GM12878 (cell line): ENCODE measurements at regions of chr12 and their contacts with region 1.

Region 1: GRCh38 chr12:94101738-94102660 is 46.4 kb upstream of the PLXNC1 start:
- DNase-seq: peak; percentile 56
- ATAC-seq: peak; percentile 93
- H3K4me3 ChIP-seq: peak overlapping the region; percentile 78
- H3K27ac ChIP-seq: no peak overlapping the region
- H3K4me1 ChIP-seq: no peaks in the 10 kb centered on the region; the same call in 1 of the 2 replicates
- H3K27me3 ChIP-seq: peaks cover 0 to 2% of the 10 kb centered on the region in 2 experiments; a peak in 2 of 4 replicates
- CTCF ChIP-seq: peak; percentile 79 to 97 (median 82); a peak in 5 of 6 replicates
- EP300 ChIP-seq: no peak
- POLR2A ChIP-seq: no peak
- RAD21 ChIP-seq: peak; percentile 93

Region 2: DNA sequence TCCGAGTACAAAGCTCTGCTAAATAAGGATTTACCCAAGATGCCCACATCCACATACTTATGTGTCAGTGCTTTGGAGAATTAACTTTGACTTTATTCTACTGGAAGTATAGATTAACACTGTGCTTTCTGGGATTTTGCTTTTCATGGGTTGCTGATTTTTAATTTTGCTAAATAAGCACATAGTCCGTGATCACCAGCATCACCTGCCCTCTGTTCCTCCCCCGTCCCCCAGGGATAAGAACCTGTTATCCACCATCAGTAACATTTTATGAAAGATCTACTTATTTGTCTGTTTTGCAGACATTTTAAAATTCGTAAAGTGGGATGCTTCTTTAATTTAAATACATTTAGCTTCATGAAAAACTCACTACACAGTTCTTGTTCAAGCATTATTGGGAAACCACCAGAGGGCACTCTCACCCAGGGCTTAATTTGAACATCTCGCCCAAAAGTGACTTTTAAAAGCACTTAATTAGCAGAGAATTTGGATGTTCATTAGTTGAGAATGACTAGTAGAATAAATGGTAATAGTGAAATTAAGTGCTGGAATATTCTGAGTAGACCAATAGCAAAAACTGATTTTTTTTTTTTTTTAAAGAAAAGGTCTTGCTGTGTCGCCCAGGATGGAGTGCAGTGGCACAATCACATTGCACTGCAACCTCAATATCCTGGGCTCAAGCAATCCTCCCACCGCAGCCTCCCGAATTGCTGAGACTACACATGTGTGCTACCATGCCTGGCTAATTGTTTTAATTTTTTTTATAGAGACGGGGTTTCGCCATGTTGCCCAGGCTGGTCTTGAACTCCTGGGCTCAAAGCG is 599.0 kb before region 1 on chr12:
- CTCF ChIA-PET with region 1: interaction called, 202 read pairs
- POLR2A ChIA-PET with region 1: interaction called, 3 read pairs
- RAD21 ChIA-PET with region 1: interaction called, 126 read pairs
- SMC1A ChIA-PET with region 1: interaction called, 115 read pairs
- in situ Hi-C with region 1: loop called (anchors 5 kb)
- intact Hi-C with region 1: loop called (anchors 1 kb)
- DNase-seq: no peak
- ATAC-seq: peak; percentile 58
- H3K4me3 ChIP-seq: no peak overlapping the region
- H3K27ac ChIP-seq: no peak overlapping the region
- H3K4me1 ChIP-seq: peaks cover 5% of the 10 kb centered on the region; the same call in 1 of the 2 replicates
- H3K27me3 ChIP-seq: no peaks in the 10 kb centered on the region
- CTCF ChIP-seq: peak; percentile 64 to 73 (median 72)
- EP300 ChIP-seq: no peak
- POLR2A ChIP-seq: no peak
- RAD21 ChIP-seq: peak; percentile 84

Region 3: GRCh38 chr12:93563807-93564538 is 538.0 kb before region 1 on chr12:
- CTCF ChIA-PET with region 1: interaction called, 148 read pairs
- POLR2A ChIA-PET with region 1: interaction called, 6 read pairs
- RAD21 ChIA-PET with region 1: interaction called, 121 read pairs
- SMC1A ChIA-PET with region 1: interaction called, 85 read pairs
- in situ Hi-C with region 1: loop called (anchors 5 kb)
- intact Hi-C with region 1: loop called (anchors 1 kb)
- DNase-seq: no peak
- ATAC-seq: peak; percentile 71
- H3K4me3 ChIP-seq: no peak overlapping the region
- H3K27ac ChIP-seq: no peak overlapping the region
- H3K4me1 ChIP-seq: no peaks in the 10 kb centered on the region
- H3K27me3 ChIP-seq: no peaks in the 10 kb centered on the region; a peak in 1 of 4 replicates
- CTCF ChIP-seq: peak; percentile 28 to 59 (median 45); a peak in 5 of 6 replicates
- EP300 ChIP-seq: no peak
- POLR2A ChIP-seq: no peak
- RAD21 ChIP-seq: peak; percentile 74

Region 4: GRCh38 chr12:93766796-93767523 is 335.0 kb before region 1 on chr12:
- CTCF ChIA-PET with region 1: interaction called, 81 read pairs
- POLR2A ChIA-PET with region 1: no interaction called
- RAD21 ChIA-PET with region 1: interaction called, 41 read pairs
- SMC1A ChIA-PET with region 1: interaction called, 46 read pairs
- in situ Hi-C with region 1: loop called (anchors 5 kb)
- intact Hi-C with region 1: loop called (anchors 1 kb)
- DNase-seq: no peak
- ATAC-seq: peak; percentile 77
- H3K4me3 ChIP-seq: no peak overlapping the region
- H3K27ac ChIP-seq: no peak overlapping the region
- H3K4me1 ChIP-seq: no peaks in the 10 kb centered on the region
- H3K27me3 ChIP-seq: no peaks in the 10 kb centered on the region
- CTCF ChIP-seq: peak; percentile 19 to 57 (median 49); a peak in 4 of 6 replicates
- EP300 ChIP-seq: no peak
- POLR2A ChIP-seq: no peak
- RAD21 ChIP-seq: peak; percentile 74

Region 5: DNA sequence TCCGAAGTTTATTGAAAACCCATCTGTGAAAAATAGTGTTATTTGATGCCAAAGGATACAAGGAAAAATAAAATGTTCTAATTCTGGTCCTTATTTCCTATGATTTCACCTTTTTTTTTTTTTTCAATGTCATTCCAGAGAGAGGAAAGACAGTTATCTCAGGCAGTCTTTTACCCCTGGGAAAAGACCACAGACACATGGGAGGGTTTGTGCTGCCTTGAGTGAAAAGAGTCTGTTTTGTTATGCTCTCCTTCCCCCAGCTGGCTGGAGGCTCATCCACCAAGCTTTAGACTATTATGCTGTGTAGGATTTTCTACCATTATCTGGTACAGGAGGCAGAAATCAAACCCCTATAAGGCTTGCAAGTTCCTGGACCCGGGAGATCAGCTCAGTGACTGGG is 273.0 kb before region 1 on chr12:
- CTCF ChIA-PET with region 1: no interaction called
- POLR2A ChIA-PET with region 1: no interaction called
- RAD21 ChIA-PET with region 1: no interaction called
- SMC1A ChIA-PET with region 1: no interaction called
- in situ Hi-C with region 1: no loop called
- intact Hi-C with region 1: no loop called
- DNase-seq: no peak
- ATAC-seq: no peak
- H3K4me3 ChIP-seq: no peak overlapping the region
- H3K27ac ChIP-seq: no peak overlapping the region
- H3K4me1 ChIP-seq: no peaks in the 10 kb centered on the region
- H3K27me3 ChIP-seq: no peaks in the 10 kb centered on the region
- CTCF ChIP-seq: no peak
- EP300 ChIP-seq: no peak
- POLR2A ChIP-seq: no peak
- RAD21 ChIP-seq: no peak

Region 6: DNA sequence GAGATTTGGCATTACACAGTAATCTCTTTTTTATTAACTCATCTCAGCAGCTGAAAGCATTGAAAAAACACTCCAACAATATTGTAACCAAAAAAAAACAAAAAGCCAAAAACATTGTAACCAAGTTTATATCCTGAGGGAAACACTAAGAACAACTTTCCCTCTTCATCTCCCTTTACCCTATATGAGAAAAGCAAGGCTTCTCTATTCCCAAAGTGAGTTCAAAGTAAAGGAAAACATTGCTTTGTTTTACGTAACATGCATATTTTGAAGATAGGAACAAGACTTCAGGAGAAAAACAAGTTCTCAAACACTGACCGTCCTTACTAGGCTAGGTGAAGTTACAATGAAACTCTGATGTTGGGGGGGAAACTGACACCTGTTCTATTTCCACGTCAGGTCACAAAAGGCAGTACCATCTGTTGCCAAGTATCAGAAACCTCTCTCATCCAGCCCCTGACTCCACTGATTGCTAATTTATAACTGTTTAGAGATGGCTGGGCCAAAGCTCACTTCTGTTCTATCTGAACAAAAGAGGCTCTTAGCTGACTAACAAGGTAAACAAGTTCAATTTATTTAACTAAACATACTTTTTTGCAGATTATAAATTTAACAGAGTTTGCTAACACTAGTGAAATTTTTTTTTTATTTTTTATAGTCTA is 21.5 kb before region 1 on chr12:
- CTCF ChIA-PET with region 1: interaction called, 62 read pairs
- POLR2A ChIA-PET with region 1: no interaction called
- RAD21 ChIA-PET with region 1: interaction called, 22 read pairs
- SMC1A ChIA-PET with region 1: interaction called, 16 read pairs
- in situ Hi-C with region 1: no loop called
- intact Hi-C with region 1: no loop called
- DNase-seq: no peak
- ATAC-seq: no peak
- H3K4me3 ChIP-seq: no peak overlapping the region
- H3K27ac ChIP-seq: no peak overlapping the region
- H3K4me1 ChIP-seq: no peaks in the 10 kb centered on the region
- H3K27me3 ChIP-seq: no peaks in the 10 kb centered on the region
- CTCF ChIP-seq: no peak
- EP300 ChIP-seq: no peak
- POLR2A ChIP-seq: no peak
- RAD21 ChIP-seq: no peak

Region 7: GRCh38 chr12:94459728-94460615 is 358.0 kb after region 1 on chr12 and contains the start of gene CEP83:
- CTCF ChIA-PET with region 1: interaction called, 11 read pairs
- POLR2A ChIA-PET with region 1: no interaction called
- RAD21 ChIA-PET with region 1: no interaction called
- SMC1A ChIA-PET with region 1: no interaction called
- in situ Hi-C with region 1: no loop called
- intact Hi-C with region 1: no loop called
- DNase-seq: peak; percentile 80
- ATAC-seq: peak; percentile 96
- H3K4me3 ChIP-seq: peak within 1 kb of the TSS; percentile 67
- H3K27ac ChIP-seq: peak within 1 kb of the TSS; percentile 94
- H3K4me1 ChIP-seq: no peaks in the 10 kb centered on the region
- H3K27me3 ChIP-seq: no peaks in the 10 kb centered on the region
- CTCF ChIP-seq: no peak
- EP300 ChIP-seq: peak in 1 of 2 experiments; percentile 53; a peak in 1 of 4 replicates
- POLR2A ChIP-seq: peak; percentile 95
- RAD21 ChIP-seq: no peak
- polyA plus RNA-seq, gene CEP83: 4.3 to 5.0 TPM

Region 8: GRCh38 chr12:94909663-94910062 is 807.7 kb after region 1 on chr12:
- CTCF ChIA-PET with region 1: no interaction called
- POLR2A ChIA-PET with region 1: no interaction called
- RAD21 ChIA-PET with region 1: no interaction called
- SMC1A ChIA-PET with region 1: no interaction called
- in situ Hi-C with region 1: no loop called
- intact Hi-C with region 1: no loop called
- DNase-seq: no peak
- ATAC-seq: no peak
- H3K4me3 ChIP-seq: no peak overlapping the region
- H3K27ac ChIP-seq: no peak overlapping the region
- H3K4me1 ChIP-seq: no peaks in the 10 kb centered on the region
- H3K27me3 ChIP-seq: no peaks in the 10 kb centered on the region; a peak in 1 of 4 replicates
- CTCF ChIP-seq: no peak
- EP300 ChIP-seq: no peak
- POLR2A ChIP-seq: no peak
- RAD21 ChIP-seq: no peak